ENCODE measurements at regions of chr3 and their contacts with region 1.

Region 1: GRCh38 chr3:160707187-160707794 is 30.3 kb downstream of the ARL14 start:
- DNase-seq: peak in 2 of 5 donors; percentile 19 to 28
- H3K4me3 ChIP-seq: no peak overlapping the region
- H3K27ac ChIP-seq: no peak overlapping the region
- H3K4me1 ChIP-seq: no peaks in the 10 kb centered on the region
- H3K27me3 ChIP-seq: no peaks in the 10 kb centered on the region
- CTCF ChIP-seq: peak; percentile 13 to 41 (median 40)
- EP300 ChIP-seq: no peak
- POLR2A ChIP-seq: no peak

Region 2: DNA sequence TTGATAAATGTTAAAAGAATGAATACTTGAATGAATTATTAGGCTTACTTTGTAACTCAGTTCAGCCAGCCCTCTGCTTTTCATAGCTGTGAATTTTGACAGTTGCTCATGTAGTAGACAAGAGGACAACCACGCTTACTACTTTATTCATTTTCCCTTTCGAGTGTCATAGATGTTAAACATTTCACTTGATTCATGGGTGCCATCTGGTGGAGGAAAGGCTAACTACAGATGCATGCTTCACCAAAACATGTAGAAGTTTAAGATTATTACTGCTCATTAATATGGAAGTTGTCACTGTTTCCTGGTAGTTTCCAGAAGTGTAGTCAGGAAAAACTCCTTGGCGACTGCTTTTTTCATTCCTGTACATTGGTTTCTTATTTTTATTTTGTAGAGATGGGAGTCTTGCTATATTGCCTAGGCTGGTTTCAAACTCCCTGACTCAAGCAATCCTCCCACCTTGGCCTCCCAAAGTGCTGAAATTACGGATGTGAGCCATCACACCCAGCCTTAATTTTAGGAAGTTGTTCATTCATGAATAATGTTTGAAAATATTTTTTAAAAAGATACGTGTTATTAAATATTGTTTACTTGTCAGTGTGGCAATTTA is 234.7 kb after region 1 on chr3:
- intact Hi-C with region 1: loop called (anchors 5 to 10 kb)
- DNase-seq: peak in 4 of 5 donors; percentile 25 to 72 (median 48)
- H3K4me3 ChIP-seq: no peak overlapping the region
- H3K27ac ChIP-seq: no peak overlapping the region
- H3K4me1 ChIP-seq: no peaks in the 10 kb centered on the region
- H3K27me3 ChIP-seq: no peaks in the 10 kb centered on the region
- CTCF ChIP-seq: peak; percentile 55 to 83 (median 76)
- EP300 ChIP-seq: no peak
- POLR2A ChIP-seq: no peak